Mammary epithelial cell (primary cell): ENCODE measurements at regions of chr14 and their contacts with region 1.

Region 1: GRCh38 chr14:20613094-20614037 is 22.2 kb upstream of the RNASE12 start:
- DNase-seq: peak; percentile 97
- H3K4me3 ChIP-seq: peak overlapping the region; percentile 50 to 69 (median 67)
- H3K27ac ChIP-seq: peak overlapping the region; percentile 73
- H3K4me1 ChIP-seq: peaks cover 14% of the 10 kb centered on the region
- H3K27me3 ChIP-seq: no peaks in the 10 kb centered on the region
- CTCF ChIP-seq: peak; percentile 75 to 81

Region 2: GRCh38 chr14:19878029-19878642 is 735.2 kb before region 1 on chr14:
- CTCF ChIA-PET with region 1: no interaction called
- dilution Hi-C with region 1: no loop called
- in situ Hi-C with region 1: no loop called
- intact Hi-C with region 1: loop called (anchors 5 kb)
- DNase-seq: peak; percentile 12
- H3K4me3 ChIP-seq: no peak overlapping the region
- H3K27ac ChIP-seq: no peak overlapping the region
- H3K4me1 ChIP-seq: no peaks in the 10 kb centered on the region
- H3K27me3 ChIP-seq: no peaks in the 10 kb centered on the region
- CTCF ChIP-seq: peak; percentile 46 to 49

Region 3: DNA sequence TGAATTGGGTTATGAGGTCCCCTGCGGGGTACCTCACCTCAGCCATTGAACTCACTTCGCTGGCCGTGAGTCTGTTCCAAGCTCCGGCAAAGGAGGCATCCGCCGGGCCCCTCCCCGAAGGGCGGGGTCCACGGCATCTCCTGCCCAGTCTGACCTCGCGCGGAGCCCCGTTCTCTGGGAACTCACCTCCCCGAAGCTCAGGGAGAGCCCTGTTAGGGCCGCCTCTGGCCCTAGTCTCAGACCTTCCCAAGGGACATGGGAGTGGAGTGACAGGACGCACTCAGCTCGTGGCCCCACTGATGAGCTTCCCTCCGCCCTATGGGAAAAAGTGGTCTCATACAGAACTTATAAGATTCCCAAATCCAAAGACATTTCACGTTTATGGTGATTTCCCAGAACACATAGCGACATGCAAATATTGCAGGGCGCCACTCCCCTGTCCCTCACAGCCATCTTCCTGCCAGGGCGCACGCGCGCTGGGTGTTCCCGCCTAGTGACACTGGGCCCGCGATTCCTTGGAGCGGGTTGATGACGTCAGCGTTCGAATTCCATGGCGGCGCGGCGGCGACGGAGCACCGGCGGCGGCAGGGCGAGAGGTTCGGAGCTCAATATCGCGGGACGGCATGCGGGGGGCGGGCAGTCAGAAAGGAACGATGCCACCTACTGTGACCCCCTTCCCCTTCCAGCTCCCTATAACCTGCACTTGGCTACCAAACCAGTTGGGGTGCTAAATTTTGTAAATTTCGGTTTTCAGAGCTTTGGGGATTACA is 270.1 kb before region 1 on chr14 and contains the start of gene PARP2:
- CTCF ChIA-PET with region 1: no interaction called
- dilution Hi-C with region 1: no loop called
- in situ Hi-C with region 1: no loop called
- intact Hi-C with region 1: loop called (anchors 1 kb)
- DNase-seq: peak; percentile 100
- H3K4me3 ChIP-seq: peak within 1 kb of the TSS; percentile 85 to 97 (median 86)
- H3K27ac ChIP-seq: peak within 1 kb of the TSS; percentile 97
- H3K4me1 ChIP-seq: no peaks in the 10 kb centered on the region
- H3K27me3 ChIP-seq: no peaks in the 10 kb centered on the region
- CTCF ChIP-seq: no peak
- total RNA-seq, gene PARP2: 5.8 to 29.3 TPM

Region 4: DNA sequence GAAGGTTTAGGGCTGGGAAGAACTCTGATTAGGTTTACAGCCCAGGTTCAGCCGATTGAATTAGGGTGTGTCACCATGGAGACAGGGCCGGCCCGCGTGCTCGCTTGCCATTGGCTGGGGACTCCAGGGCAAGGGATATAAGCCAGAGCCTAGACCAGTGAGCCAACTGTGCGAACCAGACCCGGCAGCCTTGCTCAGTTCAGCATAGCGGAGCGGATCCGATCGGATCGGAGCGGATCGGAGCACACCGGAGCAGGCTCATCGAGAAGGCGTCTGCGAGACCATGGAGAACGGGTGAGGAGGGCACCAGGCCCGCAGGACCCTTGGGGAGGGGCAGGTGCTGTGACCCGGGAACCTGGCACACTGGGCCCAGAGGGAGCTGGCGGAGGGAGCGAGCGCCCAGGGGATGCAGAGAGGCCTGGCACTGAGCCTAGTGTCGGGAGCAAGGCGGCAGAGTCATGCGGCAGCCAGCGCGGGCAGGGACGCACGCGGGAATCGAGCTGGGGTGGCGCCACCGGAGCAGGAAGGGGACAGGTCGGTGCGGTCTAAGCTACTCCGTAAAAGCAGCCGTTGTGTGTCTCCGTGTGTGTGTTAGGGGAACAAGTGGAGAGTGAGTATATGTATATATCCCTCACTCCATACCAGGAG is 144.0 kb before region 1 on chr14 and contains the start of gene PNP:
- CTCF ChIA-PET with region 1: no interaction called
- dilution Hi-C with region 1: no loop called
- in situ Hi-C with region 1: loop called in 1 of 2 experiments (anchors 25 kb)
- intact Hi-C with region 1: loop called (anchors 1 kb)
- DNase-seq: peak; percentile 88
- H3K4me3 ChIP-seq: peak within 1 kb of the TSS; percentile 55 to 83 (median 79)
- H3K27ac ChIP-seq: peak within 1 kb of the TSS; percentile 74
- H3K4me1 ChIP-seq: peaks cover 7% of the 10 kb centered on the region
- H3K27me3 ChIP-seq: no peaks in the 10 kb centered on the region
- CTCF ChIP-seq: no peak
- total RNA-seq, gene PNP: 52.8 to 106 TPM

Region 5: DNA sequence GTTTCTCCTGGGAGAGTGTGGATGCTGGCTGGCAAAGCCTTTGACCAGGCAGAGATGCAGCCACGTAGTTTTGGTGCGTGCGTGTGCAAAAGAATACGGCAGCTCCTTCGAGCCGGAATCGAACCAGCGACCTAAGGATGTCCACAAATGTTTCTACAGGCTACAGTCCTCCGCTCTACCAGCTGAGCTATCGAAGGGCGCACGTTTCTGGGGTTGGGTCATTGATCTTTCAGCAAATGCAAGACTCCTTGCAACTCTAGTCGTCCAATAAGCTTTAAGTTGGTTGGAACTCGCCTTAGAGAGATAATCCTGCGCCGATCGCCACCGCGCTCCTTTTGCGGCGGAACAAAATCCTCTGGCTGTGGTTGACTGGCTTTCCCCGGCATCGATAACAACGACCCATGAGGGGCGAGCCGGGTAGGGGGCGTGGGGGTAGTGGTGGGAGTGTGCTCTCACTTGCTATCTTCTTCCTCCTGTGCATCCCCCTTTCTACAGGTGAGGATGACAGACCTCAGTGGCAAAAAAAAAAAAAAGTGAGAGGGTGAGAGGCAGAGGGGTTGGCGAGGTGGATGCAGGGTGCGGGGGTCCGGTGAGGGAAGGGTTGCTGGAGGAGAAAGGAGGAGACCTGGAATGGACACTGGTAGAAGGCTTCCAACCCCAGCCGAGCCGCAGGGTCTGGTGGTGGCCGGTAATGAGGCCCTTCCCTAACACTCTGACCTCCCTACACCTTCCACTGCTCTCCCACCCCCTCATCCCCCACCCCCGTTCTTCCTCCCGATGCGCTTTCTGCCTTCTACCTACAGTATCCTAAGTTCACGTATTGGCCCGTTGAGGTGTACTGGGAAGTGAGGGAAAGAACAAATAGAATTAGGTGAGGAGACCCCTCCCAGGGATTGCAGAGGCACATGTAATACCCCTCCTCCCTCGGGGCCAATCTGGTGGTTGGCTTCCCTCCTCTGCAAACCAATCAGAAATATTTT is 39.9 kb after region 1 on chr14:
- CTCF ChIA-PET with region 1: no interaction called
- dilution Hi-C with region 1: loop called (anchors 5 kb)
- in situ Hi-C with region 1: no loop called
- intact Hi-C with region 1: loop called (anchors 1 kb)
- DNase-seq: peak; percentile 90
- H3K4me3 ChIP-seq: peak overlapping the region; percentile 4 to 36 (median 14)
- H3K27ac ChIP-seq: no peak overlapping the region
- H3K4me1 ChIP-seq: no peaks in the 10 kb centered on the region
- H3K27me3 ChIP-seq: peaks cover 2% of the 10 kb centered on the region
- CTCF ChIP-seq: no peak

Region 6: GRCh38 chr14:20690848-20691523 is 77.6 kb after region 1 on chr14:
- CTCF ChIA-PET with region 1: interaction called, 3 read pairs
- dilution Hi-C with region 1: no loop called
- in situ Hi-C with region 1: no loop called
- intact Hi-C with region 1: loop called (anchors 1 kb)
- DNase-seq: peak; percentile 65
- H3K4me3 ChIP-seq: no peak overlapping the region
- H3K27ac ChIP-seq: no peak overlapping the region
- H3K4me1 ChIP-seq: no peaks in the 10 kb centered on the region
- H3K27me3 ChIP-seq: no peaks in the 10 kb centered on the region
- CTCF ChIP-seq: peak; percentile 77 to 83

Region 7: GRCh38 chr14:20707622-20708021 is 94.3 kb after region 1 on chr14:
- CTCF ChIA-PET with region 1: no interaction called
- dilution Hi-C with region 1: no loop called
- in situ Hi-C with region 1: no loop called
- intact Hi-C with region 1: no loop called
- DNase-seq: peak; percentile 32
- H3K4me3 ChIP-seq: no peak overlapping the region
- H3K27ac ChIP-seq: no peak overlapping the region
- H3K4me1 ChIP-seq: no peaks in the 10 kb centered on the region
- H3K27me3 ChIP-seq: no peaks in the 10 kb centered on the region
- CTCF ChIP-seq: no peak

Region 8: DNA sequence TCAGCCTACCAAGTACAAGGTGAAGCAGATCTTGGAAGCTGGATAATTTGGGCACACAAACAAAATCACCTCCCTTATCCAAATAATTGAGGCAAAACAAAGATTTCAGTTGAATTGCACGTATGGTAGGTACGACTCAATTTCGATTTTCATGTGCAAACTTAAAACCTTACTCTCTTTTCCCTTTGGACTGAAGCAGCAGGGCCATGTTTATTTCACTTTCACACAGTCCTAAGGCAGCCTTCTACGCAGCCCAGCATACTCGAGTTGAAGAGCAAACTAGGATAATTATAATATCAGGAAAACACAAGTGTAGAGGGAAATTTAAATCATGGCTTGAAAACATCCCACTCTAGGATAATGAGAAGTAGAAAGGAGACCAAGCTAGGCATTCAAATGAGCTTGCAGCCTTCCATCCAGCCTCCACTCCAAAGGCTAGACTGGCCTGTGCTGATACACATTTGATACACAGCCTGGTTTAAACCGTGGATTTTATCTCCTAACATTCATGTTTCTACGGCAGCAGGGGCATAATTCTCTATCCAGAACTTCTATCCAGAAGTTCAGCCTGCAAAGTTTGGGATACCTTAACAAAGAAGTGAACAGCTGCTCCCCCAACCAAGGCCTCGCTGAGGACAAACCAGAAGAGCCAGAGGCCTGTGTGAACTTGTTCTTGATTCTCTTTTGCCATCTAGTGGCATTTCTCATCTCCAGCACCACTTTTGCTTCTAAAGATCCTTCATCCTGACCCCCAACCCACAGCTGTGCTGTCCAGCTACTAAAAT is 426.4 kb after region 1 on chr14:
- CTCF ChIA-PET with region 1: no interaction called
- dilution Hi-C with region 1: no loop called
- in situ Hi-C with region 1: no loop called
- intact Hi-C with region 1: loop called (anchors 1 kb)
- DNase-seq: peak; percentile 66
- H3K4me3 ChIP-seq: no peak overlapping the region
- H3K27ac ChIP-seq: no peak overlapping the region
- H3K4me1 ChIP-seq: peaks cover 58% of the 10 kb centered on the region
- H3K27me3 ChIP-seq: no peaks in the 10 kb centered on the region
- CTCF ChIP-seq: peak; percentile 67 to 82